Right cardiac atrium (tissue), 5 donors: ENCODE measurements at regions of chr12 and their contacts with region 1.

Region 1: GRCh38 chr12:124388679-124389536 is 94.0 kb downstream of the RFLNA start:
- DNase-seq: peak; percentile 93 to 96 (median 96)
- ATAC-seq: peak; percentile 70 to 75
- H3K4me3 ChIP-seq: peak overlapping the region; percentile 53
- H3K27ac ChIP-seq: peak overlapping the region; percentile 88
- H3K4me1 ChIP-seq: peaks cover 21% of the 10 kb centered on the region
- H3K27me3 ChIP-seq: no peaks in the 10 kb centered on the region

Region 2: GRCh38 chr12:124422570-124423523 is 33.9 kb after region 1 on chr12:
- intact Hi-C with region 1: loop called in 1 of 4 experiments (anchors 5 kb)
- DNase-seq: peak; percentile 98
- ATAC-seq: peak; percentile 87 to 90
- H3K4me3 ChIP-seq: no peak overlapping the region
- H3K27ac ChIP-seq: peak overlapping the region; percentile 92
- H3K4me1 ChIP-seq: peaks cover 16% of the 10 kb centered on the region
- H3K27me3 ChIP-seq: no peaks in the 10 kb centered on the region

Region 3: DNA sequence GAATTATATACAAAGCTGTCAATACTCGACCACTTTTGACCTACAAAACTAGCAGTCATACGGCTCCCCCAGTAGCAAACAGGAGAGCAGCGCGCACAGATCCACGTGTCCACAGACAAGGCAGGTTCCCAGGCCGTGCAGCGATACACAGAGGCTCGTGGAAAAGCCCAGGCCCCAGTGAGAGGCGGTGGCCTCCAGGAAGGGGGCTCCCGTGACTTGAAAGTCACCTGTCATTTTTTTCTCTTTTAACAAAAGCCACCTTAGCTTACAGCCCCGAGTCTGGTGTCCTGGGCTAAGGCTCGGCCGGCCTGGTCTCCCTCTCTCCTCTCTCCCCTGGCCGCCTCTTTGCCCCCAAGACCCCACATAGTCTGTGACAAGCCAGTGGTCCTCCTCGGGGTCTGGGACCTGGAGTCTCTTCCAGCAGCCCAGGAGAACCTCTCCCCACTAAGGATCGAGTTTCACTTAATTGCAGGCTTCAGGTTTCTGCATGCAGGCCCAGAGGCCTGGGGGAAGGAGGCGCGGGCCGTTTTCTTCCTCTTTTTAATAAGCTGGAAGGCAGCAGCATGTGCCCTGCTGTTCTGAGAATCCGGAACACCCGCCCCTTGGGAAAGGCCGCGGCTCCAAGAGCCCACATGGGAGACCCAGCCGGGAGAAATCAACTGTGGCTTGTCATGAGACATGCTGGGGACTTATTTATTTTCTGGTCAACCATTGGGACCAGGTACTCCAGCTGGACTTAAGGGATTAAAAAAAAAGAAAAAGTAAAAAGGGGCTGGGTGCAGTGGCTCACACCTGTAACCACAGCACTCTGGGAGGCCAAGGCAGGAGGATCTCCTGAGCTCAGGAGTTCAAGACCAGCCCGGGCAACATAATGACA is 162.6 kb after region 1 on chr12:
- intact Hi-C with region 1: loop called in 1 of 4 experiments (anchors 10 kb)
- DNase-seq: peak in 2 of 3 donors; percentile 83 to 87
- ATAC-seq: no peak
- H3K4me3 ChIP-seq: no peak overlapping the region
- H3K27ac ChIP-seq: peak overlapping the region; percentile 17
- H3K4me1 ChIP-seq: peaks cover 29% of the 10 kb centered on the region
- H3K27me3 ChIP-seq: no peaks in the 10 kb centered on the region